ENCODE measurements at regions of chr19 and their contacts with region 1.

Region 1: DNA sequence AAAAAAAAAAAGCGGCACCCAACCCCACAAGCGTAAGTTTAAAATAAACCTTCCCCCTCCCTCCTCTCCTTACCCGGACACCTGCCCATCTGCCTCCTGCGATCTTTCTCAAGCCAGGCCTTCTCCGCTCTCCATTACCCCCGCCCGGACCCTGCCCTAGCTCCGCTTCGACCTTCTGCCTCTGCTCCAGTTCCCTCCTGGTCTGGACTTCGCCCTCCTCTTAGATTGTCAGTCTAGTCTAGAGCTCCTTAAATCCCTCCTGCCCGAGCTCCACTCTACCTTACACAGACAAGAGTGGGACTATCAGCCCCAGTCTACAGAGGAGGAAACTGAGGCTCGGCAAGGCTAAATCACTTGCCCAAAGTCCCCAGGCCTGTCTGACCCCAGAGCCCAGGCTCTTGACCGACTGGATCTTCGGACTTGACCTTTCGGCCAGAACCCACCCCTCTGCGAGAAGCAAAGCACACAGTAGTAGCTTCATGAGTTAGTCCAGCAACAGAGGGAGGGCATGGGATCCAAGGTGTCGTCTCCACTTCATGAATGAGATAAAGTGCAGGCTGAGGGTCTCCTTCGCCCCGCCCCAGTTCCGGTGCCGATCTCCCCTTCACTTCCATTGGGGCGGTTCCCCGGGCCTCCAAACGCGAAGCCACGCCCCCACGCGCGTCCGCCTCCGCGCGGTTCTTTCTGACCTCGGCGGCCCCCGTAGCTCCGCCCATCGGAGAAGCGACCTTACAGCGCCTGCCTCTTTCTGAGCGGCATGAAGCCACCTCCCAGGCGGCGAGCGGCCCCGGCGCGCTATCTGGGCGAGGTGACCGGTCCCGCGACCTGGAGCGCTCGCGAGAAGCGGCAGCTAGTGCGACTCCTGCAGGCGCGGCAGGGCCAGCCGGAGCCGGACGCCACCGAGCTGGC is at the start of gene SNAPC2:
- DNase-seq: peak; percentile 93 to 98 (median 96)
- ATAC-seq: peak; percentile 63
- H3K4me3 ChIP-seq: peak within 1 kb of the TSS; percentile 51 to 87
- H3K4me3 Mint-ChIP-seq: peak within 1 kb of the TSS; percentile 88
- H3K27ac ChIP-seq: peak within 1 kb of the TSS; percentile 55 to 65
- H3K27ac Mint-ChIP-seq: peak within 1 kb of the TSS; percentile 90
- H3K4me1 ChIP-seq: peaks cover 42% of the 10 kb centered on the region
- H3K4me1 Mint-ChIP-seq: peaks cover 48% of the 10 kb centered on the region
- H3K27me3 ChIP-seq: peaks cover 21 to 27% of the 10 kb centered on the region in 2 experiments
- H3K27me3 Mint-ChIP-seq: peaks cover 25% of the 10 kb centered on the region
- CTCF ChIP-seq: no peak
- total RNA-seq, gene SNAPC2: 15.4 to 17.0 TPM

Region 2: GRCh38 chr19:7629347-7630054 is 290.4 kb before region 1 on chr19 and contains the starts of genes PET100 and XAB2:
- CTCF ChIA-PET with region 1: no interaction called
- POLR2A ChIA-PET with region 1: no interaction called
- intact Hi-C with region 1: loop called in 1 of 2 experiments (anchors 1 kb)
- DNase-seq: peak; percentile 90 to 99 (median 94)
- ATAC-seq: peak; percentile 94
- H3K4me3 ChIP-seq: peak within 1 kb of the TSS; percentile 98 to 100
- H3K4me3 Mint-ChIP-seq: peak within 1 kb of the TSS; percentile 97
- H3K27ac ChIP-seq: peak within 1 kb of the TSS; percentile 92 to 99
- H3K27ac Mint-ChIP-seq: peak within 1 kb of the TSS; percentile 99
- H3K4me1 ChIP-seq: peaks cover 27% of the 10 kb centered on the region
- H3K4me1 Mint-ChIP-seq: peaks cover 36% of the 10 kb centered on the region
- H3K27me3 ChIP-seq: no peaks in the 10 kb centered on the region
- H3K27me3 Mint-ChIP-seq: no peaks in the 10 kb centered on the region
- CTCF ChIP-seq: no peak
- total RNA-seq, gene PET100: 186 to 188 TPM
- total RNA-seq, gene XAB2: 127 to 133 TPM

Region 3: DNA sequence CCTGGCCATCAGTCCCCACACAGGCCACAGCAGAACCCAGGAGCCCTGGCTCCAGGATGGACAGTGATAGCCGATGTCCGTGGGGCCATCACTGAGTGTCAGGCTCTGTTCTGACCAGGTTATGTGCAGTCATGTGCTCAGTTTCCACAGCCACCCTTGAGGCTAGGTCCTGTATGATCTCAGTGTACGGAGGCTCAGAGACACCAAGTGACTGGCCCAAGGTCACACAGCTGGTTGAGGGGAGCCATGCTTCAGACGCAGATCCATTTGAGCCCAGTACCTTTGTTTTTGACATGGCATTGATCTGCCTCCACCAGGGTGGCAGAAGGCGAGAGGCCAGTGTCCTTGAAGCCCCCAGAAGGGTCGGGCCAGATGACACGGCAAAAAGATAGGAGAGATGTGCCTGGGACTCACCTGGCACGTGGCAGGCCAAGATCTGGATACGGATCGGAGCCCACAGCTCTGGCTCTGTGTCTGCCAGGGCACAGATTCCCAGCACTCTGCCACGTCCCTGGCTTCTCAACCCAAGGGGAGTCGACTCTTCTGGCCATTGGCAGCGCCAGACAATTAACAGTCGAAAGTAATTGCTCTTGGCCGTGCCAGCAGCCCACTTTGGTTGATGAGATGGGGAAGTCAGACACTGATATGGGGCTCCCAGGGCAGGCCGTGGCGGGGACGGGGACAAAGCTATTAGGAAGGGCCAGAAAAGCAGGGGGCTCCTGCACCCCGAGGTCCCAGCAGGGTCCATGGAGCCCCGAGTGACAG is 74.3 kb before region 1 on chr19:
- CTCF ChIA-PET with region 1: no interaction called
- POLR2A ChIA-PET with region 1: no interaction called
- intact Hi-C with region 1: no loop called
- DNase-seq: no peak
- ATAC-seq: no peak
- H3K4me3 ChIP-seq: no peak overlapping the region
- H3K4me3 Mint-ChIP-seq: no peak overlapping the region
- H3K27ac ChIP-seq: no peak overlapping the region
- H3K27ac Mint-ChIP-seq: no peak overlapping the region
- H3K4me1 ChIP-seq: no peaks in the 10 kb centered on the region
- H3K4me1 Mint-ChIP-seq: no peaks in the 10 kb centered on the region
- H3K27me3 ChIP-seq: no peaks in the 10 kb centered on the region
- H3K27me3 Mint-ChIP-seq: no peaks in the 10 kb centered on the region
- CTCF ChIP-seq: no peak

Region 4: DNA sequence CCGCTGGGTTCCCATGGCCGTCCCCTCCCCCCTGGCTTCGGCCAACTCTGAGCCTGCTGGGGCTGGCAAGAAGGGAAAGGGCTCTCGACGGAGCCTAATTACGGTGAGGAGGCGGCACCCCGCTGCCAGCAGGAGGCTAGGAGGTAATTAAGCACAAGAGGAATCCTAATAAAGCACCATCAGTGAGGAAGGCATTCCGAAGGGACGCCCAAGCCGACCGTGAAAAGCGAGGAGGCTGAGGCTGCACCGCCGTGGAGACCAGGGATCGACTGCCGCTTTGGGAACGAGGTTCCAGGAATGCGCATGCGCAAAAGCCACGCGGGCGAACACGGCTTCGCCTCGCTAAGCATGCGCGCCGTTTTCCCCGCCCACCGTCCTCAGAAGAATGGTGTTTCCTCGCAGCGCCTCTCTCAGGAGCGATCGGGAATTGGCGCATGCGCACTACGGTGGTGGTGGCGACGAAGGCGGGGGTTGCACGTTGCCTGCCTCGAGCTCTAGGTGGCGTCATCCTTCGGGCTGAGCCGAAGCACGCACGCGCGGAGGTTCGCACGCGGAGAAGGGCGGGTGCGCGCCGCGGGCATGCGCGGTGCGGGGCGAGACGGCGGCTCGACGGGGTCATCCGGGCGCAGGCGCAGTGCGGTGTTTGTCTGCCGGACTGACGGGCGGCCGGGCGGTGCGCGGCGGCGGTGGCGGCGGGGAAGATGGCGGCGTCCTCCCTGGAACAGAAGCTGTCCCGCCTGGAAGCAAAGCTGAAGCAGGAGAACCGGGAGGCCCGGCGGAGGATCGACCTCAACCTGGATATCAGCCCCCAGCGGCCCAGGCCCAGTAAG is 16.4 kb before region 1 on chr19 and contains the start of gene MAP2K7:
- CTCF ChIA-PET with region 1: interaction called, 8 read pairs
- POLR2A ChIA-PET with region 1: interaction called, 24 read pairs
- intact Hi-C with region 1: loop called (anchors 1 kb)
- DNase-seq: peak; percentile 99 to 100 (median 100)
- ATAC-seq: peak; percentile 81
- H3K4me3 ChIP-seq: peak within 1 kb of the TSS; percentile 59 to 87
- H3K4me3 Mint-ChIP-seq: peak within 1 kb of the TSS; percentile 91
- H3K27ac ChIP-seq: peak within 1 kb of the TSS; percentile 65 to 84
- H3K27ac Mint-ChIP-seq: peak within 1 kb of the TSS; percentile 96
- H3K4me1 ChIP-seq: peaks cover 30% of the 10 kb centered on the region
- H3K4me1 Mint-ChIP-seq: peaks cover 23% of the 10 kb centered on the region
- H3K27me3 ChIP-seq: no peaks in the 10 kb centered on the region
- H3K27me3 Mint-ChIP-seq: no peaks in the 10 kb centered on the region
- CTCF ChIP-seq: peak; percentile 59
- total RNA-seq, gene MAP2K7: 127 to 135 TPM

Region 5: DNA sequence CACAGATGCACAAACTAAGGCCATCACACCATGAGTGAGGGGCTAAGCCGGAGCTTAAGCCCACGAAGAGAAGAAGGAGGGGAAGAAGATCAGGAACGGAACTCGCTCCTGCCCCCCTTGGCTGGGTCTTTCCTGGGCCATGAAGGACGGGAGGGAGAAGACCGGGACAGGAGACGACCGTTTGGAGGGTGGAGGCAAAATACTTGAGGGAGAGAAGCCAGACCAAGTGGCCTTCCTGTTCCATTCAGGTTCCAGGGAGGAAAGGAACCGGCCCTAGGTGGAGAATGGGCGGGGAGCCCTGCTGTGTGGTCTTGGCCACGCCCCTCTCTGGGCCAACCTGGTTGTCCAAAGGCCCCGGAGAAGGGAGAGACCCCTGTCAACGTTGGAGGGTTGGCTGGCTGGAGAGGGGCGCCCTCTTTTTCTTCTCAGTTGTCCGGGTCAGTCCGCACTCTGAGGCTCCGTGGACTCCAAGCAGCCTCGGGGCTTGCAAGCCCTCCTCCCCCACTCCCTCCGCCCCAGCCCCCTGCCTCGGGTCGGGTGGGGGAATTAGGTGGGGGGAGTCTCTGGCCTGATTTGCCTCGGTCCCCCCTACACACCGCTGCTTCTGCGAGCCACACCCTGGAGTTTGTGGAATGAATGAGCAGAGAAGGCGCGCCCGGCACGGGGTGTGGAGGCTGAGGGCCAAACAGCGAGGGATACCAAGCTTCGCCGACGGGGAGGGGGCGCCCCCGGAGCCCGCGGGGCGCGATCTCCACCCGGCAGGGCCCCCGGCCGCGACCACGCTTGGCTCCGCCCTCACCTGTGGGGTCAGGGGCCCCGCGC is 228.8 kb after region 1 on chr19:
- CTCF ChIA-PET with region 1: no interaction called
- POLR2A ChIA-PET with region 1: no interaction called
- intact Hi-C with region 1: no loop called
- DNase-seq: no peak
- ATAC-seq: no peak
- H3K4me3 ChIP-seq: no peak overlapping the region
- H3K4me3 Mint-ChIP-seq: peak overlapping the region; percentile 66
- H3K27ac ChIP-seq: no peak overlapping the region
- H3K27ac Mint-ChIP-seq: no peak overlapping the region
- H3K4me1 ChIP-seq: peaks cover 8% of the 10 kb centered on the region
- H3K4me1 Mint-ChIP-seq: peaks cover 8% of the 10 kb centered on the region
- H3K27me3 ChIP-seq: peaks cover 16 to 19% of the 10 kb centered on the region in 2 experiments
- H3K27me3 Mint-ChIP-seq: peaks cover 48% of the 10 kb centered on the region
- CTCF ChIP-seq: no peak